ENCODE measurements at regions of chr14 and their contacts with region 1.

Region 1: DNA sequence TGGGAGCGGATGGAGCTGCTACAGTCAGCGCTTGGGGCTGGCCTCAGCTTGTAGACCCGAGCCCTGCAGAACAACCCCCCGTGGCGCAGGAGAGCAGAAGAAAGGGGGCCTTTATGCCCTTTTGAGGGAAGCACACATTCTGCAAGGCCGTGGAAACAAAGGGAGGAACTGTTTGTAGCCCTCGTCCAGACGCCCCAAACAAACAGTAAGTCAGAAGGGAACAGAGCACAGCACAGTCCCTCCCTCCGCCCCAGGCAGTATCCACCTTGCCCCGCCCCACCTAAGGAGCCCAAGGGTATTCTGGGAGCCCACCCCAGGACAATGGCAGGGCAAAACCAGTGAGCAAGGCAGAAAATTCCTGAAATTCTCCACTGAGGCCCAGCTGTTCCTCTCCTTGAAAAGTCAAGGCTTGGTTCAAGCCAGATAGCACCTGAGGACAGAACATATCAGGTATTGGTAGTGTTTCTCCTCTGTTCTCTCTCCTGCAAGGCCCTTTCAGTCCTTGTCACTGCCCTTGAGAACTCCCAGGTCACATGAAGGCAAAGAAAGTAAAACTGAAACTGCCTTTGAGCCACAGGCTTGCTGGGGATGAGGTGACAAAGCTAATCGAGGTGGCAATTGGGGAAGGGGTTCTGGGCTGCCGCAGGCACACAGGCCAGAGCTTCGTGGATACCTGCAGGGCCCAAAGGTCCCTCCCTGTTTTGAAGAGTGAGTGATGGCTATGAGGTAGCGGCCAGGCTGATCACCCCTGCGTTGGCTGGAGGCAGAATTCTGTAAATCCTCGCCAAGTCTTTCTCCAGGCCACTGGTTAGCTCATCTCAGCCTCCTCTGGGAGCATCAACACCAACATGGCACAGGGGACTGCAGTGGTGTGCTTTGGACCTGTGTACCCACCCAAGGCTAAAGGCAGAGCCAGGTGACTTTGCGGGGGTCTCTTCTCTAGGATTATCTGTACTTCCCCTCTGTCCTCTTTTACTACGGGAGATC is 499 bp downstream of the DGLUCY start:
- DNase-seq: peak; percentile 86
- ATAC-seq: peak; percentile 88
- H3K4me3 ChIP-seq: peak overlapping the region; percentile 100
- H3K27ac ChIP-seq: peak overlapping the region; percentile 98
- H3K4me1 ChIP-seq: peaks cover 20% of the 10 kb centered on the region
- H3K27me3 ChIP-seq: no peaks in the 10 kb centered on the region
- CTCF ChIP-seq: no peak
- EP300 ChIP-seq: 0 out of 4 replicates have a peak, but pooled peaks of 1 of the 2 experiments have one; percentile 9
- POLR2A ChIP-seq: peak; percentile 82
- RAD21 ChIP-seq: 0 out of 2 replicates have a peak, but pooled peaks have one; percentile 2

Region 2: GRCh38 chr14:91009501-91010152 is 104.7 kb before region 1 on chr14:
- CTCF ChIA-PET with region 1: interaction called, 4 read pairs
- POLR2A ChIA-PET with region 1: interaction called, 6 read pairs
- RAD21 ChIA-PET with region 1: interaction called, 6 read pairs
- SMC1A ChIA-PET with region 1: interaction called, 8 read pairs
- in situ Hi-C with region 1: no loop called
- intact Hi-C with region 1: loop called (anchors 5 kb)
- DNase-seq: peak; percentile 85
- ATAC-seq: peak; percentile 92
- H3K4me3 ChIP-seq: peak overlapping the region; percentile 37
- H3K27ac ChIP-seq: peak overlapping the region; percentile 78
- H3K4me1 ChIP-seq: peaks cover 30% of the 10 kb centered on the region
- H3K27me3 ChIP-seq: no peaks in the 10 kb centered on the region
- CTCF ChIP-seq: no peak
- EP300 ChIP-seq: peak; percentile 23 to 32; a peak in 1 of 4 replicates
- POLR2A ChIP-seq: no peak
- RAD21 ChIP-seq: peak; percentile 2; the same call in 1 of the 2 replicates

Region 3: GRCh38 chr14:91098591-91098990 is 15.8 kb before region 1 on chr14:
- CTCF ChIA-PET with region 1: interaction called, 3 read pairs
- POLR2A ChIA-PET with region 1: interaction called, 13 read pairs
- RAD21 ChIA-PET with region 1: interaction called, 4 read pairs
- SMC1A ChIA-PET with region 1: interaction called, 4 read pairs
- in situ Hi-C with region 1: no loop called
- intact Hi-C with region 1: no loop called
- DNase-seq: no peak
- ATAC-seq: no peak
- H3K4me3 ChIP-seq: no peak overlapping the region
- H3K27ac ChIP-seq: no peak overlapping the region
- H3K4me1 ChIP-seq: no peaks in the 10 kb centered on the region
- H3K27me3 ChIP-seq: no peaks in the 10 kb centered on the region; a peak in 1 of 4 replicates
- CTCF ChIP-seq: no peak
- EP300 ChIP-seq: no peak
- POLR2A ChIP-seq: no peak
- RAD21 ChIP-seq: no peak

Region 4: DNA sequence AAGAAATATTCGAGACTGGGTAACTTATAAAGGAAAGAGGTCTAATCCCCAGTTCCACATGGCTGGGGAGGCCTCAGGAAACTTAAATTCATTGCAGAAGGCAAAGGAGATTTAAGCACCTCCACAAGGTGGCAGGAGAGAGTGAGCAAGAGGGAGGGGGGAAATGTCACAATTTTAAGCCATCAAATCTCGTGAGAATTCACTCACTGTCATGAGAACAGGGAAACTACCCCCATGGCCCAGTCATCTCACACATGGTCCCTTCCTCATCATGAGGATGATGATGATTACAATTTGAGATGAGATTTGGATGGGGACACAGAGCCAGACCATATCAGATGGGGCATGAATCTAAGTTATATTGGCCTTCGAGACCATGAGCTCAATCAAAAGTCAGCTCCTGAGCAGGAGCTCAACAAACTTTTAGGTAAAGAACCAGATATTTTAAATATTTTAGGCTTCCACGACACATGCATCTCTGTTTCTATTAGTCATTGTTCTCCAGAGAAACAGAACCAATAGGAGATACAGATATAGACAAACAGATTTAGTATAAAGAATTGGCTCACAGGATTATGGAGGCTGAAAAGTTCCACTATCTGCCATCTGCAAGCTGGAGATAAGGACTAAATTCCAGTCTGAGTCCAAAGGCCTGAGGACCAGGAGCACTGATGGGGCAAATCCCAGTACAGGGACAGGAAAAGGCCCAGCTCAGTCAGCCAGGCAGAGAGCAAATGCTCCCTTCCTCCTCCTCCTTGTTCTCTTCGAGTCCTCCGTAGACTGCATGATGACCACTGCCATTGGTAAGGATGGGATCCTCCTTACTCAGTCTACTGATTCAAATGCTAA is 24.4 kb after region 1 on chr14:
- CTCF ChIA-PET with region 1: interaction called, 26 read pairs
- POLR2A ChIA-PET with region 1: interaction called, 11 read pairs
- RAD21 ChIA-PET with region 1: interaction called, 17 read pairs
- SMC1A ChIA-PET with region 1: interaction called, 38 read pairs
- in situ Hi-C with region 1: no loop called
- intact Hi-C with region 1: no loop called
- DNase-seq: no peak
- ATAC-seq: peak; percentile 70
- H3K4me3 ChIP-seq: no peak overlapping the region
- H3K27ac ChIP-seq: no peak overlapping the region
- H3K4me1 ChIP-seq: peaks cover 14% of the 10 kb centered on the region
- H3K27me3 ChIP-seq: no peaks in the 10 kb centered on the region
- CTCF ChIP-seq: peak; percentile 47 to 61 (median 49)
- EP300 ChIP-seq: no peak
- POLR2A ChIP-seq: no peak
- RAD21 ChIP-seq: peak; percentile 53

Region 5: DNA sequence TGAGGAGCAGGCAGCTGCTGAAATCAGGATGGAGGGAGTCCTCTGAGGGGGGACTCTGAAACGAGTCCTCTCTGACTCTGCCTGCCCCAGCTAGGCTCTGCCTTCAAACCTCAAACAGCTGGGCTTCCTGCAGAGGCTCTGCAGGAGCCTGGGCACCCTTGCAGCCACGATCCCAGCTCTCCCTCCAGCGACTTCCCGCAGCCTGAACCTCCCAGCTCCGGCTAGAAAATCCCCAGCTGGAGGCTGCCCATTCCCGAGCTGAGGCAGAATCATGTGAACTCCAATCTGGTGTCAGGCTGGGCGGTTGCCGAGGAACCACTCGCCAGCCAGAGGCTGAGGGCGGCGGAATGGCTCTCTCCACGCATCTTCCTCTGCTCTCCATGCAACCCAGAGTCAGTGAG is 130.1 kb after region 1 on chr14 and contains the start of gene GPR68:
- CTCF ChIA-PET with region 1: no interaction called
- POLR2A ChIA-PET with region 1: interaction called, 10 read pairs
- RAD21 ChIA-PET with region 1: interaction called, 7 read pairs
- SMC1A ChIA-PET with region 1: interaction called, 4 read pairs
- in situ Hi-C with region 1: no loop called
- intact Hi-C with region 1: no loop called
- DNase-seq: no peak
- ATAC-seq: 0 out of 3 replicates have a peak, but pooled peaks have one; percentile 2
- H3K4me3 ChIP-seq: peak within 1 kb of the TSS; percentile 16
- H3K27ac ChIP-seq: peak within 1 kb of the TSS; percentile 86
- H3K4me1 ChIP-seq: peaks cover 32% of the 10 kb centered on the region
- H3K27me3 ChIP-seq: no peaks in the 10 kb centered on the region
- CTCF ChIP-seq: no peak
- EP300 ChIP-seq: no peak
- POLR2A ChIP-seq: no peak
- RAD21 ChIP-seq: no peak
- polyA plus RNA-seq, gene GPR68: 0.06 to 0.35 TPM

Measured in GM12878 (cell line).